ENCODE measurements at regions of chr16 and their contacts with region 1.

Region 1: DNA sequence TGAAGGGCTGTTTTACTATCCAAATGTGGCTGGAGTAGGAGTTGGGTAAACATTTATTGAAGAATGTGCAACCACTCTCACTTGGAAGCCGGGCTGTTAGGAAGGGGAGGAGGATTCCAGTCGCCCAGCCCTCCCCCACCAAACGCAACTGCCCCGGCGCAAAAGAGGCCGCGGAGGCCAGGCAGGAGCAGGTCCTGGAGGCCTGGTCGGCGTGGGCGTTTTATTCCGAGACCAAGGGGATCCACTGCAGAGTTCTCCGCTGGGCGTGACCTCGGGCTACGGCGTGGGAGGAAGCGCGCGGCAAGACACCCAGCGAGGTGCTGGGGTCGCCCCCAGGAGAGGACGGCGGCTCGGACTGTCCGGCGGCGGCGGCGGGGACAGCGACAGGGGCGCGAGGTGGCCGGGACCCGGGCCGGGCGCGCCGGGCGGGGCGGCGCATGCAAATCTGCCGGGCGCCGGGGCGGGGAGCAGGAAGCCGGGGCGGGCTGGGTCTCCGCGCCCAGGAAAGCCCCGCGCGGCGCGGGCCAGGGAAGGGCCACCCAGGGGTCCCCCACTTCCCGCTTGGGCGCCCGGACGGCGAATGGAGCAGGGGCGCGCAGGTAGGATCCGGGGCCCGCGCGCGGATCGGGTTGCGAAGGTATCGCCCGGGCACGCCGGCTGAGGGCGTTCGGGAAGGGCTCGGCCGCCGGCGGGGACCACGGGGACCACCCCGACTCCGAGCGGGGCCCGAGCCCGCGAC is at the start of gene IL4R:
- DNase-seq: peak; percentile 80
- H3K4me3 ChIP-seq: peak within 1 kb of the TSS; percentile 91
- H3K27ac ChIP-seq: peak within 1 kb of the TSS; percentile 99
- H3K4me1 ChIP-seq: peaks cover 9% of the 10 kb centered on the region
- H3K27me3 ChIP-seq: no peaks in the 10 kb centered on the region
- CTCF ChIP-seq: no peak
- total RNA-seq, gene IL4R: 74.8 to 80.0 TPM

Region 2: DNA sequence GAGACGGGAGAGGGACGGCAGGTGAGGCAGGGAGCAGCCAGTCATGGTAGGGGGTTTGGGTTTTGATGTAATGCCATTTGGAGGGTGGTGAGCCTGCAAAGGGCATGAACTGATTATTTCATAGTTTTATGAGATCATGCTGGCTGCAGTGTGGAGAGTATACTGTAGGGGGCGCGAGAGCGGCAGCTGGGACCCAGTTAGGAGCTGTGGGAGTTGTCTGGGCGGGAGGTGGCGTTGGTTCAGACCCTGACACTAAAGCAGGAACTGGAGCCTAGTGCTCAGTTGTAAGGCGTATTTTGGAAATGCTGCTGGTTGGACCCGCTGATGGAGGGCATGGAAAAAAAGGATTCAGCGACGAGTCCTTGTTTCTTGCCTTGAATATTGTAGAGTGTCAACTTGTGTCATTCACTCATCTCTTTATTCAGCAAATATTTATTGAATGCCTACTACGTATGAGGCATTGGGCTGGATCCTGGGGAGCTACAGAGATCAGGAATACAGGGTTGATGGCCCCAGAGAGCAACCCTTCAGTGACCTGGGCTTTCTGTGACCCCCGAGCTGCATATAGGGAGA is 134.0 kb before region 1 on chr16:
- intact Hi-C with region 1: no loop called
- DNase-seq: peak; percentile 93
- H3K4me3 ChIP-seq: no peak overlapping the region
- H3K27ac ChIP-seq: no peak overlapping the region
- H3K4me1 ChIP-seq: no peaks in the 10 kb centered on the region
- H3K27me3 ChIP-seq: no peaks in the 10 kb centered on the region
- CTCF ChIP-seq: peak; percentile 92

Region 3: DNA sequence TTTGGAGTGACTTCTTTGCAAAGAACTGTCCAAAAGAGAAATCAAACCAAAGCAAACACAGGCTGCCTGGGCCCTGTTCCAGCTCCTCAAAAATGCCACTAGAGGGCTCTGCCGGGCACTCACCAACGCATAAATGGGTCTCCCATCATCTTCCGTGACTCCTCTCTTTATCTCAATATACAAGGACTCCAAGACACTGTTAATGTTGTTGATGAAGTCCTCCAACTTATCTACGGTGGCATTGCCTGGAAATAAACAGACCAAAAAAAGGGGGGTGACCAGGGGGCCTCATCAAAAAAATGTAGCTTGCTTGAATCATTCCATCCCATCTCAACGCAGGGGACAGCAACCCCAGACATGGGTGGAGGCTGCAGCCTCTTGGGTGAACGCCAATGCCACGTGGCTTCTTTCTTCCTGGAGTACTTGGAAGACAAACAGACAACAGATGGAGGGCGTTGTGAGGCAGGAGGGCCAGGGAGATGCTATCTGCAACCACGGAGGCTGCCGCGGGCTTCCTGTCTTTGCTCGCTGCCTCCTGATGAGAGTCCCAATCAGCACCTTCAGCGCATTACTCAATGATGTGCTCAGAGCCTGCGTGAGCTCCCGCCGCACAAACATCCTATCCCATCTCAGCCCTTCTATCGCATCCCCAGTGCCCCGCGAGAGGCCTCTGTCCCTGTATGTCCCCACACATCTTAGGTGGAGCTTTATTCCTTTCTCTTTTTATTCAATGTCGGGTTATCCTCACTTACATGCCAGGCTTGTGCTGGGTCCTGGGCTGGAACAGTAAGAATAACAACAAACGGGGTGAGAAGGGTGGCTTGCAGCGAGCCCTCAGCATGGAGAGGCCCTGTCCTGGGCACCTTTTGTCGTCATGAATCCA is 78.3 kb before region 1 on chr16:
- intact Hi-C with region 1: loop called (anchors 5 kb)
- DNase-seq: peak; percentile 95
- H3K4me3 ChIP-seq: no peak overlapping the region
- H3K27ac ChIP-seq: peak overlapping the region; percentile 71
- H3K4me1 ChIP-seq: peaks cover 35% of the 10 kb centered on the region
- H3K27me3 ChIP-seq: no peaks in the 10 kb centered on the region
- CTCF ChIP-seq: peak; percentile 74

Region 4: GRCh38 chr16:27253526-27253930 is 60.1 kb before region 1 on chr16:
- intact Hi-C with region 1: no loop called
- DNase-seq: no peak
- H3K4me3 ChIP-seq: no peak overlapping the region
- H3K27ac ChIP-seq: no peak overlapping the region
- H3K4me1 ChIP-seq: no peaks in the 10 kb centered on the region
- H3K27me3 ChIP-seq: no peaks in the 10 kb centered on the region
- CTCF ChIP-seq: no peak

Region 5: GRCh38 chr16:27268376-27269299 is 45.0 kb before region 1 on chr16 and contains the start of gene NSMCE1:
- intact Hi-C with region 1: loop called (anchors 10 kb)
- DNase-seq: peak; percentile 100
- H3K4me3 ChIP-seq: peak within 1 kb of the TSS; percentile 80
- H3K27ac ChIP-seq: peak within 1 kb of the TSS; percentile 75
- H3K4me1 ChIP-seq: peaks cover 2% of the 10 kb centered on the region
- H3K27me3 ChIP-seq: no peaks in the 10 kb centered on the region
- CTCF ChIP-seq: no peak
- total RNA-seq, gene NSMCE1: 37.6 to 58.2 TPM